ENCODE measurements at regions of chr1 and their contacts with region 1.

Region 1: GRCh38 chr1:248825909-248826760 is at the start of gene SH3BP5L:
- DNase-seq: peak; percentile 68 to 95
- H3K4me3 ChIP-seq: peak within 1 kb of the TSS; percentile 80 to 90
- H3K27ac ChIP-seq: peak within 1 kb of the TSS; percentile 88 to 93
- H3K4me1 ChIP-seq: peaks cover 18 to 45% of the 10 kb centered on the region in 2 donors
- H3K27me3 ChIP-seq: no peaks in the 10 kb centered on the region
- CTCF ChIP-seq: peak; percentile 43 to 70 (median 57)
- total RNA-seq, gene SH3BP5L: 15.9 TPM

Region 2: DNA sequence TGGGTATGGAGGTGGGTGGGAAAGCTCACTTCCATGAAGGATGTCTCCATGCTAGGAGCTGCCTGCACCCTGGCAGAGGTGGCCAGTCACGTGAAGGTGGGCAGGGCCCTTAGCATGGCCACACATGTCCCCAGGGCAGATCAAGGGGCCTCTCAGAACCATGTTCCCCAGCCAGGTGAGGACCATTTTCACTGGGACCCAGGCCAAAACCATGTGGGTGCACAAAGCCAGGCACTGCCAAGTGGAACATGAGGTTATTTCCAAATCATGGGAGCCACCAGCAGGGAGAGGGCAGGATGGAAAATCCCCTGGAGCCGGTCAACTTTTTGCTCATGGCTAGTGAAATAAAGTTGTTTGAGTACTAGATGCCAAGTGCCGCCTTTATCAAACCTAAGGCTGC is 23.0 kb after region 1 on chr1:
- intact Hi-C with region 1: no loop called
- DNase-seq: peak in 1 of 2 donors; percentile 47
- H3K4me3 ChIP-seq: no peak overlapping the region
- H3K27ac ChIP-seq: no peak overlapping the region
- H3K4me1 ChIP-seq: no peaks in the 10 kb centered on the region
- H3K27me3 ChIP-seq: no peaks in the 10 kb centered on the region
- CTCF ChIP-seq: no peak

Region 3: GRCh38 chr1:248858891-248859889 is 33.1 kb after region 1 on chr1 and contains the start of gene ZNF692:
- intact Hi-C with region 1: loop called (anchors 2 kb)
- DNase-seq: peak; percentile 86 to 99
- H3K4me3 ChIP-seq: peak within 1 kb of the TSS; percentile 69
- H3K27ac ChIP-seq: peak within 1 kb of the TSS; percentile 83 to 90
- H3K4me1 ChIP-seq: peaks cover 11 to 25% of the 10 kb centered on the region in 2 donors
- H3K27me3 ChIP-seq: no peaks in the 10 kb centered on the region
- CTCF ChIP-seq: no peak
- total RNA-seq, gene ZNF692: 13.8 TPM

Region 4: DNA sequence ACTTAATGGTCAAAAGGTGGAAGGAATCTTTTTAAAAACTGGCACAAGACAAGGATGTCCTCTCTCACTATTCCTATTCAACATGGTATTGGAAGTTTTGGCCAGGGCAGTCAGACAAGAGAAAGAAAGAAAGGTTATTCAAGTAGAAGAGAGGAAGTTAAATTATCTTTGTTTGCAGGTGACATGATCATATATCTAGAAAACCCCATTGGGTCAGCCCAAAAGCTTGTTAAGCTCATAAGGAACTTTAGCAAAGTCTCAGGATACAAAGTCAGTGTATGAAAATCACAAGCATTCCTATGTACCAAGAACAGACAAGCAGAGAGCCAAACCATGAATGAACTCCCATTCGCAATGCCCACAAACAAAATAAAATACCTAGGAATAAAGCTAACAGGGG is 74.5 kb after region 1 on chr1:
- intact Hi-C with region 1: no loop called
- DNase-seq: no peak
- H3K4me3 ChIP-seq: no peak overlapping the region
- H3K27ac ChIP-seq: no peak overlapping the region
- H3K4me1 ChIP-seq: no peaks in the 10 kb centered on the region
- H3K27me3 ChIP-seq: no peaks in the 10 kb centered on the region
- CTCF ChIP-seq: no peak